Cardiac septum (tissue), 1 donor: ENCODE measurements at regions of chr12 and their contacts with region 1.

Region 1: GRCh38 chr12:80269803-80270552 is 170.6 kb downstream of the OTOGL start:
- DNase-seq: no peak

Region 2: GRCh38 chr12:80195074-80195726 is 74.8 kb before region 1 on chr12:
- intact Hi-C with region 1: loop called (anchors 2 kb)
- DNase-seq: no peak